Heart left ventricle (tissue), 16 donors: ENCODE measurements at regions of chr12 and their contacts with region 1.

Region 1: GRCh38 chr12:38906482-38907170 is 1.2 kb upstream of the CPNE8 start:
- DNase-seq: peak; percentile 88 to 92 (median 91)
- ATAC-seq: peak; percentile 72 to 88 (median 84)
- H3K4me3 ChIP-seq: peak overlapping the region; percentile 55 to 85 (median 74)
- H3K27ac ChIP-seq: peak overlapping the region; percentile 88 to 98 (median 94)
- H3K4me1 ChIP-seq: peaks cover 0 to 27% (median 17%) of the 10 kb centered on the region in 12 donors
- H3K27me3 ChIP-seq: no peaks in the 10 kb centered on the region
- CTCF ChIP-seq: peak; percentile 76 to 98 (median 87)
- POLR2A ChIP-seq: peak in 1 of 2 donors; percentile 37

Region 2: DNA sequence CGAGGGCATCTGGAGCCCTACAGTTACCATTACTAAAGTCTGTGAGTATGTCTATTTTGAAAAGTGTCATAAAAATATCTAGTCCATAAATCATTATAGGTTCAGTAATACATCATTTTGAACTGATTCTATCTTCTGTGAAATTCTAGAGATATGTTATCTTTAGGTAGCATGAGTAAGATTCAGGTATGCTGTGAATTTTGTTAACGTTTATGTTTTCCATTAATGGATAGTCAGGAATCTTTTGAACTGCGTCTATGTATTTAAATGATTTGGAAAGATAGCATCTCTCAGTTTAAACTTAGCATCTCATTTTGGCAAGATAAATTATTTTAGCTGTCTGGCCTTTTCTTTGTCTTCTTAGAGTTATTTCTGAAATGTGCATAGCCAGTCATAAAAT is 581.7 kb before region 1 on chr12:
- intact Hi-C with region 1: loop called in 3 of 10 experiments (anchors 10 kb)
- DNase-seq: no peak
- ATAC-seq: no peak
- H3K4me3 ChIP-seq: no peak overlapping the region
- H3K27ac ChIP-seq: no peak overlapping the region
- H3K4me1 ChIP-seq: no peaks in the 10 kb centered on the region
- H3K27me3 ChIP-seq: no peaks in the 10 kb centered on the region
- CTCF ChIP-seq: no peak
- POLR2A ChIP-seq: no peak

Region 3: GRCh38 chr12:38689704-38690103 is 216.9 kb before region 1 on chr12:
- intact Hi-C with region 1: loop called in 1 of 10 experiments (anchors 10 kb)
- DNase-seq: no peak
- ATAC-seq: no peak
- H3K4me3 ChIP-seq: no peak overlapping the region
- H3K27ac ChIP-seq: no peak overlapping the region
- H3K4me1 ChIP-seq: no peaks in the 10 kb centered on the region
- H3K27me3 ChIP-seq: no peaks in the 10 kb centered on the region
- CTCF ChIP-seq: no peak
- POLR2A ChIP-seq: no peak

Region 4: GRCh38 chr12:38771871-38772270 is 134.8 kb before region 1 on chr12:
- intact Hi-C with region 1: loop called in 1 of 10 experiments (anchors 10 kb)
- DNase-seq: no peak
- ATAC-seq: no peak
- H3K4me3 ChIP-seq: peak overlapping the region in 1 of 12 donors; percentile 1
- H3K27ac ChIP-seq: no peak overlapping the region
- H3K4me1 ChIP-seq: peaks cover 0 to 9% (median 0%) of the 10 kb centered on the region in 12 donors
- H3K27me3 ChIP-seq: no peaks in the 10 kb centered on the region
- CTCF ChIP-seq: no peak
- POLR2A ChIP-seq: no peak

Region 5: GRCh38 chr12:39012870-39013269 is 106.2 kb after region 1 on chr12:
- intact Hi-C with region 1: no loop called
- DNase-seq: no peak
- ATAC-seq: no peak
- H3K4me3 ChIP-seq: no peak overlapping the region
- H3K27ac ChIP-seq: no peak overlapping the region
- H3K4me1 ChIP-seq: no peaks in the 10 kb centered on the region
- H3K27me3 ChIP-seq: no peaks in the 10 kb centered on the region
- CTCF ChIP-seq: no peak
- POLR2A ChIP-seq: no peak

Region 6: DNA sequence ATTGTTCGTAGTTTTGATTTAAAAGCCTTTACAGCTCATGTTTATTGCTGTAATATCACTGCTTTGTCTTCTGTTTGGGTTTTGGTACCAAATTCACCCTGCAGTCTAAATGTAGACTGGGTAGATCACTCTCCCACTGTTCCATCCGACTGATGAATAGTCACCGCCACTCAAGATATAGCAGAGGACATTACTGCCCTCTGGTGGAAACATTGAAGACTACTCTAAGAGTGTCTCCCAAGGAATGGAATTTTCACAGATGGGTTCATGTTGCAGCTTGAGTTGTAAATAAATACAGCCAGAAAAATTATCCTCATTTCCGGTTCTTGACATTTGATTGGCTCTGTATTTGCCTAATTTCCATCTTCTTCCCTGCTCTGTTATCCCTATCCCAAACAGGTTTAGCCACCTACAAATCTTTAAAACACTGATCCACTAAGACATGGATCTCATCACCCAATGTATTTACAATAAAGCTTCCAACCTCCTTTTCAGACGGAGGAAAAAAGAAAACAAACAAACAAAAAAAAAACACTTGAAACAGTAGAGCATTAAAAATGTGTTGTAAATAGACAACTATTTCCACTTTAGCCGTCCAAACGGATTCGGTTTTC is 197.0 kb after region 1 on chr12:
- intact Hi-C with region 1: loop called in 6 of 10 experiments (anchors 5 kb)
- DNase-seq: peak in 2 of 5 donors; percentile 19 to 24
- ATAC-seq: peak; percentile 81 to 89 (median 88)
- H3K4me3 ChIP-seq: no peak overlapping the region
- H3K27ac ChIP-seq: no peak overlapping the region
- H3K4me1 ChIP-seq: no peaks in the 10 kb centered on the region
- H3K27me3 ChIP-seq: peaks cover 0 to 4% (median 0%) of the 10 kb centered on the region in 9 donors
- CTCF ChIP-seq: peak; percentile 63 to 88 (median 80)
- POLR2A ChIP-seq: no peak